ENCODE measurements at regions of chr11 and their contacts with region 1.

Region 1: GRCh38 chr11:134033696-134034491 is 35.0 kb upstream of the JAM3 start:
- DNase-seq: peak in 33 of 35 experiments; percentile 25 to 78 (median 54)
- ATAC-seq: peak; percentile 78 to 83 (median 81)
- H3K4me3 ChIP-seq: peak overlapping the region; percentile 31 to 69
- H3K4me3 Mint-ChIP-seq: peak overlapping the region; percentile 56 to 58 (median 56)
- H3K27ac ChIP-seq: peak overlapping the region; percentile 67
- H3K27ac Mint-ChIP-seq: peak overlapping the region; percentile 59 to 86
- H3K4me1 ChIP-seq: peaks cover 19 to 65% of the 10 kb centered on the region in 2 experiments
- H3K4me1 Mint-ChIP-seq: peaks cover 59 to 79% (median 66%) of the 10 kb centered on the region in 3 donors
- H3K27me3 ChIP-seq: peaks cover 0 to 26% of the 10 kb centered on the region in 2 experiments
- H3K27me3 Mint-ChIP-seq: peaks cover 0 to 9% of the 10 kb centered on the region in 2 donors

Region 2: GRCh38 chr11:133956650-133957633 is 77.0 kb before region 1 on chr11 and contains the start of gene IGSF9B:
- CTCF ChIA-PET with region 1: no interaction called
- POLR2A ChIA-PET with region 1: interaction called in 1 of 2 experiments, 11 read pairs
- DNase-seq: peak; percentile 77 to 94 (median 86)
- ATAC-seq: peak; percentile 94 to 97 (median 96)
- H3K4me3 ChIP-seq: peak within 1 kb of the TSS; percentile 83 to 92
- H3K4me3 Mint-ChIP-seq: peak within 1 kb of the TSS; percentile 85 to 91 (median 88)
- H3K27ac ChIP-seq: peak within 1 kb of the TSS; percentile 71
- H3K27ac Mint-ChIP-seq: peak within 1 kb of the TSS; percentile 74 to 90
- H3K4me1 ChIP-seq: peaks cover 31 to 49% of the 10 kb centered on the region in 2 experiments
- H3K4me1 Mint-ChIP-seq: peaks cover 43 to 47% (median 43%) of the 10 kb centered on the region in 3 donors
- H3K27me3 ChIP-seq: peaks cover 0 to 54% of the 10 kb centered on the region in 2 experiments
- H3K27me3 Mint-ChIP-seq: peaks cover 8 to 35% of the 10 kb centered on the region in 2 donors
- total RNA-seq, gene IGSF9B: 23.5 to 101 (median 63.1) TPM

Region 3: GRCh38 chr11:133977067-133977677 is 56.7 kb before region 1 on chr11:
- CTCF ChIA-PET with region 1: no interaction called
- POLR2A ChIA-PET with region 1: no interaction called
- DNase-seq: no peak
- ATAC-seq: no peak
- H3K4me3 ChIP-seq: no peak overlapping the region
- H3K4me3 Mint-ChIP-seq: no peak overlapping the region
- H3K27ac ChIP-seq: no peak overlapping the region
- H3K27ac Mint-ChIP-seq: no peak overlapping the region
- H3K4me1 ChIP-seq: no peaks in the 10 kb centered on the region
- H3K4me1 Mint-ChIP-seq: no peaks in the 10 kb centered on the region
- H3K27me3 ChIP-seq: peaks cover 0 to 47% of the 10 kb centered on the region in 2 experiments
- H3K27me3 Mint-ChIP-seq: peaks cover 12 to 24% of the 10 kb centered on the region in 2 donors

Measured in T-cell (primary cell).